Endothelial cell of umbilical vein (primary cell): ENCODE measurements at regions of chr18 and their contacts with region 1.

Region 1: DNA sequence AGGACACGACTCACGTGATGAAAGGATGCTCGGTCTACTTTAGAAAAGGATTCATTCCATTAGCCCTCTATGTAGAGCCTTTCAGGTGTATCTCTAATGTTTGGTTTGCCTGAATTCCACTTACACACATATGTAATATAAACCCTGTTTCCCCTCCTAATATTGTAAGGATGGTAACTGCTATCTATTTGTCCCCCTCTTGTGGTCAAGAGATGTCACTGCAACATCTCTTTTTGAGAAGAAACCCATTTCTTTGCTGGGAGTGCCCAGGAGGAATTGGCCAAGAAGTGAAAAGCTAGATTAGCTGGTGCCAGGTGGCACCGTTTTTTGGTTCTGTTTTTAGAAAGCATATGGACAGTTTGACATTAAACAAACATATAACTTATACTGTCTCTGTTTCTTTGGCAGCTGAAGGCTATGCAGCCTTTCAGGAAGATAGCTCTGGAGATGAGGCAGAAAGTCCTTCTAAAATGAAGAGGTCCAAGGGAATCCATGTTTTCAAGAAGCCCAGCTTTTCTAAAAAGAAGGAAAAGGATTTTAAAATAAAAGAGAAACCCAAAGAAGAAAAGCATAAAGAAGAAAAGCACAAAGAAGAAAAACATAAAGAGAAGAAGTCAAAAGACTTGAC is 41.2 kb downstream of the RALBP1 start:
- DNase-seq: peak; percentile 65
- H3K4me3 ChIP-seq: no peak overlapping the region
- H3K27ac ChIP-seq: no peak overlapping the region
- H3K4me1 ChIP-seq: peaks cover 10% of the 10 kb centered on the region
- H3K27me3 ChIP-seq: no peaks in the 10 kb centered on the region
- CTCF ChIP-seq: peak; percentile 73 to 81
- POLR2A ChIP-seq: no peak

Region 2: DNA sequence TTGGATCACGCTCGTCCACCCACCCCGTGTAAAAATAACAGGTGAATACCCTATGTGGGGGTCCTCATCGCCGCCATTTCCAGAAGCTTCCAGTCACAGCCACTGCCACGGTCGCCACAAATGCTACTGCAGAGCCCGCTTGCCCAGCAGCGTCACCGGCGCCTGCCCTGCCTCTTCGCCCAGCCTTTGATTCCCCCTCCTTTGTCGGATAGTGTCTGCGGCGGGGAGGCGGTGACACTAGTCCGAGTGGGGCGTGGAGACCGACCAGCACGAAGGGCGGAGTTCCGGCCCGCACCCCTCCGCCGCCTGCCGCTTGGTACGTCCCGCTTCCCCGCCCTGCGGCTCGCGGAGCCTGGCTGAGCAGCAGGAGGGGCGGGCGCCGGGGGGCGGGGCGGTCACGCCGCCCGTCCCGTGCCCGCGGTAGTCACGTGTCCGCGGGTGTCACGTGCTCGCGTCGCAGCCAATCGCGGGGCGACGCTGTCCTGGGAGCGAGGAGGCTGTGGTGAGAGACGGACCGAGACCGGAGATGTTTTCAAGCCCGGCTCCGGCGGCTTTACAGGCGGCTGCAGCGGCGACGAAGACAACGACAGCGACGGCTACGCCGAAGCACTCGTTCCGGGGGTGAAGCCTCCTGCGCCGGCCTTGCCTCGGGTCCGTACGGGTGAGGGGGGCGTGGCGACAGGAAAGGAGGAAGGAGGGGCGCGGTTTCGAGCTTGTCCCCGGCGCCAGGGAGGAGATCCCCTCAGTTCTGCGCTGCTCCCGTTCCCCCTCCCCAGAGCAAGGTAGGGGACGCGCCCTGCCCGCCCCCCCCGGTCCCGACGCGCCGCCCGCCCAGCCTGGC is 380.0 kb before region 1 on chr18 and contains the start of gene ANKRD12:
- CTCF ChIA-PET with region 1: interaction called, 16 read pairs
- POLR2A ChIA-PET with region 1: no interaction called
- dilution Hi-C with region 1: no loop called
- intact Hi-C with region 1: loop called (anchors 5 kb)
- DNase-seq: peak; percentile 99
- H3K4me3 ChIP-seq: peak within 1 kb of the TSS; percentile 50 to 86 (median 70)
- H3K27ac ChIP-seq: peak within 1 kb of the TSS; percentile 95
- H3K4me1 ChIP-seq: peaks cover 31% of the 10 kb centered on the region
- H3K27me3 ChIP-seq: no peaks in the 10 kb centered on the region
- CTCF ChIP-seq: no peak
- POLR2A ChIP-seq: peak; percentile 82
- total RNA-seq, gene ANKRD12: 25.1 and 25.4 TPM in 2 replicates

Region 3: GRCh38 chr18:9287036-9287435 is 229.5 kb before region 1 on chr18:
- CTCF ChIA-PET with region 1: interaction called, 4 read pairs
- POLR2A ChIA-PET with region 1: no interaction called
- dilution Hi-C with region 1: no loop called
- intact Hi-C with region 1: loop called (anchors 10 kb)
- DNase-seq: no peak
- H3K4me3 ChIP-seq: no peak overlapping the region
- H3K27ac ChIP-seq: no peak overlapping the region
- H3K4me1 ChIP-seq: no peaks in the 10 kb centered on the region
- H3K27me3 ChIP-seq: no peaks in the 10 kb centered on the region
- CTCF ChIP-seq: no peak
- POLR2A ChIP-seq: no peak

Region 4: GRCh38 chr18:9348079-9348681 is 168.4 kb before region 1 on chr18:
- CTCF ChIA-PET with region 1: interaction called, 10 read pairs
- POLR2A ChIA-PET with region 1: no interaction called
- dilution Hi-C with region 1: no loop called
- intact Hi-C with region 1: no loop called
- DNase-seq: peak; percentile 53
- H3K4me3 ChIP-seq: no peak overlapping the region
- H3K27ac ChIP-seq: peak overlapping the region; percentile 48
- H3K4me1 ChIP-seq: peaks cover 16% of the 10 kb centered on the region
- H3K27me3 ChIP-seq: no peaks in the 10 kb centered on the region
- CTCF ChIP-seq: no peak
- POLR2A ChIP-seq: no peak

Region 5: GRCh38 chr18:9404565-9405060 is 111.9 kb before region 1 on chr18:
- CTCF ChIA-PET with region 1: interaction called, 6 read pairs
- POLR2A ChIA-PET with region 1: no interaction called
- dilution Hi-C with region 1: no loop called
- intact Hi-C with region 1: loop called (anchors 10 kb)
- DNase-seq: peak; percentile 94
- H3K4me3 ChIP-seq: peak overlapping the region in 1 of 3 experiments; percentile 10
- H3K27ac ChIP-seq: peak overlapping the region; percentile 99
- H3K4me1 ChIP-seq: peaks cover 37% of the 10 kb centered on the region
- H3K27me3 ChIP-seq: no peaks in the 10 kb centered on the region
- CTCF ChIP-seq: no peak
- POLR2A ChIP-seq: peak; percentile 69

Region 6: DNA sequence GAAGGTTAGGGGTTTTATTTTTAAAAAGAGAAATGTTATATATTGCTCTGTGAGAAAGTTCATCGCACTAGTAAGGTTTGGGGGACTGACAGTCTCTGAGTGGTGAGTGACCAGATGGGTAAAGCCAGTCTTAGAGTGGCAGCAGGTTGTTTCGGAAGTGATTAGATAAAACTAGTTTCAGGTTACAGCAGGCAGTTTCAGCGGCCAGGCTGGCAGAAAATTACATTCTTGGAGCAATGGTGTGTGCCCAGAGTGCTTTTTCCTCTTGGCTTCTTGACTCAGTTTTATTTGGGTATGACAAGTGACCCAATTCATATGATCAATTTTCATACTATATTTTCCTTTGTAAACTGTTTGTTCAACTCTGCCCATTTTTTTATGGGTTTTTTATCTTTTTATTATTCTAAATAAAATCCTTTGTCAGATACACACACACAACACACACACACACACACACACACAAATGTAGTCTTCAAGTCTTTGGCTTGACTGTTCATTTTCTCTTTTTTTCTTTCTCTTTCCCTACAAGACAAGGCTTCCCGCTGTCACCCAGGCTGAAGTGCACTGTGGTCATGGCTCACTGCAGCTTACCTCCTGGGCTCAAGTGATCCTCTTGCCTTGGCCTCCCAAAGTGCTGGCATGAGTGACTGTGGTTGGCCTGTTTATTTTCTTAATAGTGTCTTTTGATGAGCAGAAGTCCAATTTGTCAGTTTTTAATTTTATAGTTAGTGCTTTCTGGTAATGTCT is 10.3 kb before region 1 on chr18:
- CTCF ChIA-PET with region 1: interaction called, 21 read pairs
- POLR2A ChIA-PET with region 1: no interaction called
- dilution Hi-C with region 1: no loop called
- intact Hi-C with region 1: no loop called
- DNase-seq: no peak
- H3K4me3 ChIP-seq: no peak overlapping the region
- H3K27ac ChIP-seq: no peak overlapping the region
- H3K4me1 ChIP-seq: no peaks in the 10 kb centered on the region
- H3K27me3 ChIP-seq: no peaks in the 10 kb centered on the region
- CTCF ChIP-seq: no peak
- POLR2A ChIP-seq: no peak

Region 7: GRCh38 chr18:9731380-9731779 is 214.8 kb after region 1 on chr18:
- CTCF ChIA-PET with region 1: no interaction called
- POLR2A ChIA-PET with region 1: no interaction called
- dilution Hi-C with region 1: no loop called
- intact Hi-C with region 1: no loop called
- DNase-seq: no peak
- H3K4me3 ChIP-seq: no peak overlapping the region
- H3K27ac ChIP-seq: no peak overlapping the region
- H3K4me1 ChIP-seq: peaks cover 4% of the 10 kb centered on the region
- H3K27me3 ChIP-seq: no peaks in the 10 kb centered on the region
- CTCF ChIP-seq: no peak
- POLR2A ChIP-seq: no peak